K562 (cell line): ENCODE measurements at regions of chr1 and their contacts with region 1.

Region 1: DNA sequence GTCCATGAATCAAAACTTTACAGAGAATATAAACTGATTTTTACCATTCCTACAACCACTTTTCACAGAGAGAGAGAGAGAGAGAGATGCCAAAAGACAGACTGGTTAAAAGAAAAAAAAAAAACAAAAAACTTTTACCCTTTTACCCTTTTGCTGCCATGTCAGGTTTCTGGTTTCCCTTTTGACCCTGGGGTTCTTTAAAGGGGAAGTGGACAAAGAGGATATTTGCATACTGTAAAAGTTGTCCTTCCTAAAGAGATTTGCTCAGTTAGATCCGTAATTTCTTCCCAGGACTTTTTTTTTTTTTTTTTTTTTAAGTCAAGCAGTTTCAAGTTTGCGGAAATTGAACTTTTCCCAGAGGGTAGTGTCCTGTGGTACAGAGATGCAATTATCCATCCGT is 287.8 kb upstream of the RGS18 start:
- DNase-seq: no peak
- ATAC-seq: no peak
- H3K4me3 ChIP-seq: no peak overlapping the region
- H3K27ac ChIP-seq: no peak overlapping the region
- H3K4me1 ChIP-seq: no peaks in the 10 kb centered on the region
- H3K27me3 ChIP-seq: no peaks in the 10 kb centered on the region
- CTCF ChIP-seq: no peak
- EP300 ChIP-seq: no peak
- POLR2A ChIP-seq: no peak
- RAD21 ChIP-seq: no peak

Region 2: DNA sequence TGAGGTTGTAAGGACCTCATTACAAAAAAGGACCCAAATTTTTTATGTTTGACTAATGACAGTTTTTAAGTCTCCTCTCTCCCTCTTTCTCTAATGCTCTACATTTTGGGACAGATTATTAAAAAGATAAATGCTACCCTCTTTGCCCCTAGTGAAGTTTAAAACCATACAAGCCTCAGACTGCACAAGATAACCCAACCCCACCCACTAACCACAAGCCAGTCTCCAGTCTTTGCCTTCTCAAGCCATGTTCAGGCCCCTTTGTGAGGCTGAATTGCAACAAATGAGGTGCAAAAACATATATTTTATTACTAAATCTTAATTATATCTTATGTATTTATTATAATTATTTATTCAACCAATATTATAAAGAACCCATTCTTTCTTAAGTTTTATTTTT is 795.6 kb before region 1 on chr1:
- CTCF ChIA-PET with region 1: no interaction called
- POLR2A ChIA-PET with region 1: no interaction called
- in situ Hi-C with region 1: loop called (anchors 10 kb)
- intact Hi-C with region 1: no loop called
- DNase-seq: peak in 1 of 4 experiments; percentile 14
- ATAC-seq: no peak
- H3K4me3 ChIP-seq: no peak overlapping the region
- H3K27ac ChIP-seq: no peak overlapping the region
- H3K4me1 ChIP-seq: no peaks in the 10 kb centered on the region
- H3K27me3 ChIP-seq: no peaks in the 10 kb centered on the region
- CTCF ChIP-seq: no peak
- EP300 ChIP-seq: no peak
- POLR2A ChIP-seq: no peak
- RAD21 ChIP-seq: no peak

Region 3: DNA sequence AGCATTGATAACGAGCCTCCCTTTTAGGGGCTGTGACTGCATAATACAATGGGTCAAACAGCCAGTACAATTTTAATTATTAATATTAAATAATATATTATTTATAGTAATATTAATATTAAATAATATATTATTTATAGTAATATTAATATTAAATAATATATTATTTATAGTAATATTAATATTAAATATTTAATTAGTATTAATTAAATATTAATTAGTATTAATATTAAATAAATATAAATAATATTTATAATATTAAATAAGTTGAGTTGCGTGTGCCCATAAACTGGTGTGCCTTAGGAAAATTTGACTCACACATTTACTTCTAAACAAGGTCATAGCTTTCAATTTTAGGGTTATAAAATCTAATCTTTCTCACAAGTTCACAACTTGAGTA is 221.6 kb before region 1 on chr1:
- CTCF ChIA-PET with region 1: no interaction called
- POLR2A ChIA-PET with region 1: no interaction called
- in situ Hi-C with region 1: no loop called
- intact Hi-C with region 1: no loop called
- DNase-seq: no peak
- ATAC-seq: no peak
- H3K4me3 ChIP-seq: no peak overlapping the region
- H3K27ac ChIP-seq: no peak overlapping the region
- H3K4me1 ChIP-seq: no peaks in the 10 kb centered on the region
- H3K27me3 ChIP-seq: no peaks in the 10 kb centered on the region
- CTCF ChIP-seq: no peak
- EP300 ChIP-seq: no peak
- POLR2A ChIP-seq: no peak
- RAD21 ChIP-seq: no peak

Region 4: GRCh38 chr1:191831572-191831971 is 38.9 kb before region 1 on chr1:
- CTCF ChIA-PET with region 1: no interaction called
- POLR2A ChIA-PET with region 1: no interaction called
- in situ Hi-C with region 1: no loop called
- intact Hi-C with region 1: no loop called
- DNase-seq: peak in 2 of 4 experiments; percentile 10 to 45
- ATAC-seq: peak; percentile 84
- H3K4me3 ChIP-seq: no peak overlapping the region
- H3K27ac ChIP-seq: no peak overlapping the region
- H3K4me1 ChIP-seq: no peaks in the 10 kb centered on the region
- H3K27me3 ChIP-seq: no peaks in the 10 kb centered on the region
- CTCF ChIP-seq: peak in 2 of 3 experiments; percentile 21 to 45; a peak in 3 of 6 replicates
- EP300 ChIP-seq: no peak
- POLR2A ChIP-seq: no peak
- RAD21 ChIP-seq: peak in 1 of 2 experiments; percentile 67; a peak in 2 of 4 replicates